ENCODE measurements at regions of chr15 and their contacts with region 1.

Region 1: GRCh38 chr15:51162865-51163762 is 68.4 kb upstream of the TNFAIP8L3 start:
- DNase-seq: peak; percentile 47 to 71
- H3K4me3 ChIP-seq: no peak overlapping the region
- H3K4me3 Mint-ChIP-seq: no peak overlapping the region
- H3K27ac Mint-ChIP-seq: no peak overlapping the region
- H3K4me1 ChIP-seq: no peaks in the 10 kb centered on the region
- H3K4me1 Mint-ChIP-seq: no peaks in the 10 kb centered on the region
- H3K27me3 ChIP-seq: no peaks in the 10 kb centered on the region
- H3K27me3 Mint-ChIP-seq: no peaks in the 10 kb centered on the region
- CTCF ChIP-seq: peak; percentile 84 to 86

Region 2: GRCh38 chr15:51192521-51193280 is 29.6 kb after region 1 on chr15:
- CTCF ChIA-PET with region 1: interaction called, 43 read pairs
- POLR2A ChIA-PET with region 1: no interaction called
- intact Hi-C with region 1: loop called (anchors 1 kb)
- DNase-seq: peak; percentile 82 to 87
- H3K4me3 ChIP-seq: no peak overlapping the region
- H3K4me3 Mint-ChIP-seq: no peak overlapping the region
- H3K27ac Mint-ChIP-seq: no peak overlapping the region
- H3K4me1 ChIP-seq: no peaks in the 10 kb centered on the region
- H3K4me1 Mint-ChIP-seq: peaks cover 8% of the 10 kb centered on the region
- H3K27me3 ChIP-seq: no peaks in the 10 kb centered on the region; the same call in 1 of the 2 replicates
- H3K27me3 Mint-ChIP-seq: no peaks in the 10 kb centered on the region
- CTCF ChIP-seq: peak; percentile 94 to 95

Region 3: GRCh38 chr15:51401872-51402517 is 238.9 kb after region 1 on chr15:
- CTCF ChIA-PET with region 1: interaction called, 6 read pairs
- POLR2A ChIA-PET with region 1: no interaction called
- intact Hi-C with region 1: loop called (anchors 2 kb)
- DNase-seq: peak in 1 of 2 experiments; percentile 46
- H3K4me3 ChIP-seq: no peak overlapping the region
- H3K4me3 Mint-ChIP-seq: no peak overlapping the region
- H3K27ac Mint-ChIP-seq: no peak overlapping the region
- H3K4me1 ChIP-seq: no peaks in the 10 kb centered on the region
- H3K4me1 Mint-ChIP-seq: no peaks in the 10 kb centered on the region
- H3K27me3 ChIP-seq: no peaks in the 10 kb centered on the region
- H3K27me3 Mint-ChIP-seq: peaks cover 5% of the 10 kb centered on the region
- CTCF ChIP-seq: peak; percentile 52 to 56

Region 4: GRCh38 chr15:51460796-51461195 is 297.7 kb after region 1 on chr15:
- CTCF ChIA-PET with region 1: no interaction called
- POLR2A ChIA-PET with region 1: no interaction called
- intact Hi-C with region 1: no loop called
- DNase-seq: no peak
- H3K4me3 ChIP-seq: no peak overlapping the region
- H3K4me3 Mint-ChIP-seq: no peak overlapping the region
- H3K27ac Mint-ChIP-seq: no peak overlapping the region
- H3K4me1 ChIP-seq: no peaks in the 10 kb centered on the region
- H3K4me1 Mint-ChIP-seq: no peaks in the 10 kb centered on the region
- H3K27me3 ChIP-seq: no peaks in the 10 kb centered on the region
- H3K27me3 Mint-ChIP-seq: no peaks in the 10 kb centered on the region
- CTCF ChIP-seq: no peak

Region 5: DNA sequence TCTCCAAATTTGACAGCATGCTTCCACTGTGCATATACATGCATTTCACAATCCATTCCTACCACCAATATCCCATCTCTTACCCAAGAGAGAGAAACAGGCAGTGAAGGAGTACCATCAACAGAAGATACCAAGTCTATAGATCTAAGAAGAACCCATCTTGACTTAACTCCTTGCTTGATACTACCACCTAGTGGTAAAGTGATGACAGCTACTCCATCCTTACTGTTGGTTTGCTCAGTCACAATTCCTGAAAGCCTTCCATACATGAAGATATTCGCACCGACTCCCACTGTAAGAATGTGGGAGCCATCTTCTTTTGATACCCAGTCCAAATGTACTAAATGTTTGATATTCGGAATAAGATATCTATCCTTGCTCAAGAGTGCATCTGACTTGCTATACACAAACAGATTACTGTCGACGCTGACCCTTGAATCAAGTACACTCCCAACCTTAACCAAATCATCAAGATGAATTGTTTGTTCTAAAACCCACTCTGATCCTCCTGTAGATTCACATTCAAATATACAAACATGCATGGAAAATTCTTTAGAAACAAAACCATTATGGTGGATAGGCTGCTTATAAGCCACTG is 336.4 kb after region 1 on chr15:
- CTCF ChIA-PET with region 1: no interaction called
- POLR2A ChIA-PET with region 1: no interaction called
- intact Hi-C with region 1: loop called (anchors 10 kb)
- DNase-seq: peak in 1 of 2 experiments; percentile 25
- H3K4me3 ChIP-seq: no peak overlapping the region
- H3K4me3 Mint-ChIP-seq: no peak overlapping the region
- H3K27ac Mint-ChIP-seq: no peak overlapping the region
- H3K4me1 ChIP-seq: 0 out of 2 replicates have a peak, but pooled peaks cover 2% of the 10 kb centered on the region
- H3K4me1 Mint-ChIP-seq: no peaks in the 10 kb centered on the region
- H3K27me3 ChIP-seq: no peaks in the 10 kb centered on the region
- H3K27me3 Mint-ChIP-seq: no peaks in the 10 kb centered on the region
- CTCF ChIP-seq: peak; percentile 42 to 58